CD8-positive, alpha-beta T cell (primary cell): ENCODE measurements at regions of chr14 and their contacts with region 1.

Region 1: DNA sequence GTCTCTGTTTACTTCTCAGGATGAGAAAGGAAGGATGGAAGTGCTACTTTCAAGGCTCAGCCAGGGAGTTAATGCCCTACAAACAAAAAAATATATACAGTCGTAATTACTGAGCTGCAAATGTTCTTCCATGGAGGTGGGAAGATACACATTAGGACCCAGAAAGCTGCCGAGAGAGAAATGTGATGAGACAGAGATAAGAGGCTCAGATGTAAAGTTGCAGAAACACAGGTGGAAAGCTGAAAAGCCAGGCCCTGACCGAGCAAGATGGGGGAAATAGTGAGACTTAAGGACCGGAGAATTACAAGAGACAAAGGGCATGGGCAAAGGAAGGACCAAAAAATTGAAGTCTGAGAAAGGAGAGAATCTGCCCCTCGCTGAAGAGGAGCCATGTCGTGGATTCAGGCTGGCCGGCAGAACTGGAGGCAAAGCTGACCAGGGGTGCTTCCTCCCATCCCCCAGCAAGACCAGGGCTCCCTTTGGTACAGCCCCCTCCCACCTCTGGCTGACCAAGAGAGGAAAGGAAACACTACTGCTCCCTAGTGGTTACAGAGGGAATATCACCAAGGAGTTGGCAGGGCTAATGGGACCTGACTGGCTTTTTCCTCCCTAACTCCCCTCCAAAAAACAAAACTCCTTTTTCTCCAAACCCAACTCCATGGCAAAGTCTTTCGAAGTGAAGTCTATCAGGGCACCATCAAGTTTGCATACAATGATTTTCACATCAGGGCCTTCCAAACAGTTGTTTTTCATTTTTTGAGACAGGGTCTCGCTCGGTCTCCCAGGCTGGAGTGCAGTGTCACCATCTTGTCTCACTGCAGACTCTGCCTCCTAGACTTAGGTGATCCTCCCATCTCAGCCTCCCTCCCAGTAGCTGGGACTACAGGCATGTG is 12.1 kb downstream of the ZFHX2 start:
- DNase-seq: peak in 3 of 9 experiments; percentile 28 to 68 (median 56)
- ATAC-seq: peak; percentile 84
- H3K4me3 ChIP-seq: no peak overlapping the region
- H3K4me3 Mint-ChIP-seq: no peak overlapping the region
- H3K27ac ChIP-seq: no peak overlapping the region
- H3K27ac Mint-ChIP-seq: no peak overlapping the region
- H3K4me1 ChIP-seq: no peaks in the 10 kb centered on the region
- H3K4me1 Mint-ChIP-seq: peaks cover 2% of the 10 kb centered on the region
- H3K27me3 ChIP-seq: no peaks in the 10 kb centered on the region
- H3K27me3 Mint-ChIP-seq: no peaks in the 10 kb centered on the region
- CTCF ChIP-seq: peak; percentile 64

Region 2: DNA sequence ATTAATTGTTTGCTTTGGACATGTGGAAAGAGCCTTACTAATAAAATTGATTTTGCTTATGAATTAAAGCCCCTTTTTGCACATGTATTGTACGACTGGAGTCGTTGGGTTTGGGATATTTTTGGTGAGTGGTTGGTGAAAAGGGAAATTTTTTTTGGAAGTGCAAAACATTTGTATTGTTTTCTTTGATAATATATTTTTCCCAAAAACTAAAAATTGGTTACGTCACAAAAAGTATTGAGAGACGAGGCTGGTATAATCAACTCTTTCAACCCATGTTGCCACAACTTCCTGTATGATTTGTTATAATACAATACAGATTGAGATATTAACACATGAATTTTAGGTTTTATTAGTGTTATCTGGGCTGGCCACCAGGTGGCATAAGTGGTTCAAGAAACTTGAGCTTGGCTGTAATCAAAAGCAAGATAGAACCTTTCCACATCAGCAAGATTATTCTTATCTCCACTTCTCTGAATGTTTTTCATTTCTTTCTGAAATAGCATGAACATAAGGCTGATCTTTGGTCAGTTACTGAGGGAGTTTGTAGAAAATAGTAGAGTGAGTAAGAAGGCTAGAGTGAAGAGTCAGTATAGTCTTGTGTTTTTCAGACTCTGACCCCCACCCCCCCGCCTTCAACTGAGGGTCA is 61.3 kb before region 1 on chr14:
- CTCF ChIA-PET with region 1: interaction called, 72 read pairs
- POLR2A ChIA-PET with region 1: no interaction called
- intact Hi-C with region 1: loop called (anchors 1 kb)
- DNase-seq: peak; percentile 27 to 80 (median 69)
- ATAC-seq: peak; percentile 82
- H3K4me3 ChIP-seq: no peak overlapping the region
- H3K4me3 Mint-ChIP-seq: no peak overlapping the region
- H3K27ac ChIP-seq: peak overlapping the region in 1 of 2 experiments; percentile 3
- H3K27ac Mint-ChIP-seq: no peak overlapping the region
- H3K4me1 ChIP-seq: no peaks in the 10 kb centered on the region
- H3K4me1 Mint-ChIP-seq: peaks cover 9% of the 10 kb centered on the region
- H3K27me3 ChIP-seq: no peaks in the 10 kb centered on the region
- H3K27me3 Mint-ChIP-seq: no peaks in the 10 kb centered on the region
- CTCF ChIP-seq: peak; percentile 79

Region 3: GRCh38 chr14:23528555-23528954 is 10.9 kb before region 1 on chr14:
- CTCF ChIA-PET with region 1: interaction called, 12 read pairs
- POLR2A ChIA-PET with region 1: interaction called, 4 read pairs
- intact Hi-C with region 1: no loop called
- DNase-seq: no peak
- ATAC-seq: no peak
- H3K4me3 ChIP-seq: no peak overlapping the region
- H3K4me3 Mint-ChIP-seq: no peak overlapping the region
- H3K27ac ChIP-seq: no peak overlapping the region
- H3K27ac Mint-ChIP-seq: no peak overlapping the region
- H3K4me1 ChIP-seq: no peaks in the 10 kb centered on the region
- H3K4me1 Mint-ChIP-seq: peaks cover 5% of the 10 kb centered on the region
- H3K27me3 ChIP-seq: no peaks in the 10 kb centered on the region
- H3K27me3 Mint-ChIP-seq: no peaks in the 10 kb centered on the region
- CTCF ChIP-seq: no peak

Region 4: DNA sequence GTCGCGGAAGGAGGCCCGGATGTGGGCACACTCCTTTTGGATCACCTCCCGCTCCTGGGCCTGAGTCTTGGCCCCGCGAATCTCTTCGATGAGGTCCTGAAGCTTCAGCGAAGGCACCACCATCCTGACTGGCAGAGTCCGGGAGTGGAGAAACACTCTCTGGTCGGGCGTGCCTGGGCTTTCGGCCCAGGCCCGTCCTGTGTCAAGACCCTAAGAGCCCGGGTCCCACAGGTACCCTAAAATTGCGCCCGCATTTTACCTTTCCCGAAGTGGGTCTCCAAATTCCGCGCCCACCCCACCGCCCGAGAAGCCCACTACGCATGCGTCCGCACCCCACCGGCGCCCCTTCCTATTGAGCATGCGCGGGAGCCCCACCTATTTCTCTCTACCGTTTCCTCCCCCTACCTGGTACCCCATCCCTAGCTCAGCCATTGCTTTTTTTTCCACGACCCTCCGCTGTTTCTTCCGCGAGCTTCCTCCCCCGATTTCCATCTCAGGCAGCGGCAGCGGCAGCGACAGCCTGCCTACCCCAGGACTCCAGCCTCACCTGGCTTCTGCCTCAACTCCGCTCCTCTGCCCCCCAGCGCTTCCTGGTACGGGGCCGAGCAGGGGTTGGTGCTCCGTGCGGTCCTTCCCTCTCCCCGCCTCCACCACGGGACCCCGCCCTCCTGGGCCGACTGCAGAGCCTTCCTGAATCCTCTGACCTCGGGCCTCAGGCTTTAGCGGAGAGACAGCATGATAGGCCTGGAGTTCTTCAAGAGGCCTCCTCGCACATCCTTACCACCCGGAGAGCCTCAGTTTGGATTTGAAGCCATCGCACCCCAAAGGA is 27.9 kb after region 1 on chr14 and contains the start of gene AP1G2:
- CTCF ChIA-PET with region 1: interaction called, 10 read pairs
- POLR2A ChIA-PET with region 1: no interaction called
- intact Hi-C with region 1: no loop called
- DNase-seq: peak; percentile 66 to 92 (median 84)
- ATAC-seq: peak; percentile 90
- H3K4me3 ChIP-seq: peak within 1 kb of the TSS; percentile 75 to 97
- H3K4me3 Mint-ChIP-seq: peak within 1 kb of the TSS; percentile 99
- H3K27ac ChIP-seq: peak within 1 kb of the TSS; percentile 86
- H3K27ac Mint-ChIP-seq: peak within 1 kb of the TSS; percentile 97
- H3K4me1 ChIP-seq: peaks cover 20% of the 10 kb centered on the region
- H3K4me1 Mint-ChIP-seq: peaks cover 44% of the 10 kb centered on the region
- H3K27me3 ChIP-seq: no peaks in the 10 kb centered on the region
- H3K27me3 Mint-ChIP-seq: peaks cover 1% of the 10 kb centered on the region
- CTCF ChIP-seq: no peak
- total RNA-seq, gene AP1G2: 153 to 160 TPM